AG04450 (cell line): ENCODE measurements at regions of chr17 and their contacts with region 1.

Region 1: DNA sequence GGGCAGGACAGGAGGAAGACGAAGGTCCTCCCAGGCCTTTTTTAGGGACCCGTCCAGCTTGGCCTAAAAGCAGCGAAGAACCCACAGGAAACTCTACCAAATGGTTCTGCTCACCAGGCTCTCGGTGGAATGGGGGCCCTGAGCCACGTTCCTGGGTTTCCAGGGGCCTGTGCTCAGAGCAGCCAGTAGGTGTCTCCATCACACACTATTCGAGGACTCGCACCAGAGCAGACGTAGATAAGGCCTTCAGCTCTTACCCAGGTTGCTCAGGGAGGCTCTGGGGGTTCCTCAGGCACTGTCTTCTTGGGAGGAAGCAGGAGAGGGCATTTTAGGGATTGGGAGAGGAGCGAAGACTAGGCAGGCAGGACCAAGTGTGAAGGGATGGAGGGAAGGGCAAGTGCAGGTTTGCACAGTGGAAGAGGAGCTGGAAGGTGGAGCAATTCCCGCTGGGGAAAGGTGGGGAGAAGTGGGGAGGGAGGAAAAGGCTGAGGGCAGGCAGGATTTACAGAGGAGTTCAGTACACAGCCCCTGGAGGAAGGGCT is 157.1 kb downstream of the RGS9 start:
- DNase-seq: peak; percentile 46
- H3K4me3 ChIP-seq: no peak overlapping the region
- H3K27ac ChIP-seq: no peak overlapping the region
- H3K27me3 ChIP-seq: peaks cover 8% of the 10 kb centered on the region
- CTCF ChIP-seq: peak; percentile 91

Region 2: DNA sequence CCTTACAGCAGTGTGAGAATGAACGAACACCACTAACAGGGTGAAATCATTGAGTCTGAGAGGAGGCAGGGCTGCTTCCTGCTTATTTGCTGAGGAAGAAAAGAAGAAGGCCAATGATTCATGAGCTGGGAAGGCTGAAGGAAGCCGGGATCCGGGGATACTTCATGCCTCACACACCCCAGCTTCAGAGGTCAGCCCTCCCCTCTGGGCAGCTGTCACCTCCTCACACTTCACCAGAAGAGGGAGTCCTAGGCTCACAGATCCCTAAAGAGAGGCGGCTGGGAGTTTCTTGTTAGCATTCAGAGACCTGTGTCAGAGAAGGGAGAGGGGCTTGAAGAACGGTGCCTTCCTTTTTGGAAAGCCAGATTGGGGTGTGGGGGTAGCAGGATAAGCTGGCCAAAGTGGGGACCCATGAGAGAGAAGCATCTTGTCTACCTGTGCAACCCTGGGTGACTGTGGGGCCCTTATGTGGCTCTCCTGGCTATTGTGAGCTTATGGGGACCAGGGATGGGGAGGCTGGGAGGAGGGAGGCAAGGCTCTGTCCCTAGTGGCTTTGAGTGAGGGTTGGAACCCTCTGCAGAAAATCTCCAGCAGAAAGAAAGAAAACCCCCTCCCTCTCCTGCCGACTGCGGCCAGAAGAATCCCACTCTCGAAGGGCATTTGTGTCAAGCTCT is 62.5 kb before region 1 on chr17:
- CTCF ChIA-PET with region 1: interaction called, 17 read pairs
- POLR2A ChIA-PET with region 1: no interaction called
- DNase-seq: peak; percentile 63
- H3K4me3 ChIP-seq: no peak overlapping the region
- H3K27ac ChIP-seq: no peak overlapping the region
- H3K27me3 ChIP-seq: peaks cover 14% of the 10 kb centered on the region
- CTCF ChIP-seq: peak; percentile 80

Region 3: GRCh38 chr17:65485376-65486299 is 191.4 kb after region 1 on chr17:
- CTCF ChIA-PET with region 1: no interaction called
- POLR2A ChIA-PET with region 1: no interaction called
- DNase-seq: no peak
- H3K4me3 ChIP-seq: no peak overlapping the region
- H3K27ac ChIP-seq: no peak overlapping the region
- H3K27me3 ChIP-seq: peaks cover 17% of the 10 kb centered on the region
- CTCF ChIP-seq: no peak

Region 4: GRCh38 chr17:65556014-65556909 is 262.0 kb after region 1 on chr17:
- CTCF ChIA-PET with region 1: interaction called, 24 read pairs
- POLR2A ChIA-PET with region 1: no interaction called
- DNase-seq: no peak
- H3K4me3 ChIP-seq: no peak overlapping the region
- H3K27ac ChIP-seq: peak overlapping the region; percentile 21
- H3K27me3 ChIP-seq: peaks cover 11% of the 10 kb centered on the region
- CTCF ChIP-seq: peak; percentile 76

Region 5: GRCh38 chr17:65561394-65562205 is 267.4 kb after region 1 on chr17 and contains the start of gene AXIN2:
- CTCF ChIA-PET with region 1: interaction called, 24 read pairs
- POLR2A ChIA-PET with region 1: no interaction called
- DNase-seq: peak; percentile 53
- H3K4me3 ChIP-seq: peak within 1 kb of the TSS; percentile 67
- H3K27ac ChIP-seq: peak within 1 kb of the TSS; percentile 96
- H3K27me3 ChIP-seq: peaks cover 11% of the 10 kb centered on the region
- CTCF ChIP-seq: 0 out of 2 replicates have a peak, but pooled peaks have one; percentile 22
- polyA plus RNA-seq, gene AXIN2: 2.4 and 2.8 TPM in 2 replicates

Region 6: DNA sequence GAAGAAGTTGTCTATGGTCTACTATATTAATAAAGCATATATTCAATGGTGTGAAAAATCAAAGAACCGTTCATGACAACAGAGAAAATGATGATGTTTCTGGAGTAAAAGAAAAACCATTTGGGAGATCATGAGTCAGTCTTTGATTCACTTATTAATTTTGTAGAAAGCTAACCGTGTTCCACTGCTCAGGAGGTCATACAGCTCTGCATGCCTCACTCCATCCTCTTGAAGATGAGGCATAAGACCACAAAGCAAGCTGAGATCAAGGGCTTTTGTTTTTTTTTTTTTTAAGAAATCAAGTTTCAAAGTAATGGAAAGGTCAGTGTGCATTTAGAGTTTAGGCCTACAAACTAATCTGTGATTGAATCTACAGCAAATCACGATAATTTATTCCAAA is 691.3 kb after region 1 on chr17:
- CTCF ChIA-PET with region 1: interaction called, 20 read pairs
- POLR2A ChIA-PET with region 1: no interaction called
- DNase-seq: no peak
- H3K4me3 ChIP-seq: no peak overlapping the region
- H3K27ac ChIP-seq: no peak overlapping the region
- H3K27me3 ChIP-seq: no peaks in the 10 kb centered on the region
- CTCF ChIP-seq: no peak

Region 7: DNA sequence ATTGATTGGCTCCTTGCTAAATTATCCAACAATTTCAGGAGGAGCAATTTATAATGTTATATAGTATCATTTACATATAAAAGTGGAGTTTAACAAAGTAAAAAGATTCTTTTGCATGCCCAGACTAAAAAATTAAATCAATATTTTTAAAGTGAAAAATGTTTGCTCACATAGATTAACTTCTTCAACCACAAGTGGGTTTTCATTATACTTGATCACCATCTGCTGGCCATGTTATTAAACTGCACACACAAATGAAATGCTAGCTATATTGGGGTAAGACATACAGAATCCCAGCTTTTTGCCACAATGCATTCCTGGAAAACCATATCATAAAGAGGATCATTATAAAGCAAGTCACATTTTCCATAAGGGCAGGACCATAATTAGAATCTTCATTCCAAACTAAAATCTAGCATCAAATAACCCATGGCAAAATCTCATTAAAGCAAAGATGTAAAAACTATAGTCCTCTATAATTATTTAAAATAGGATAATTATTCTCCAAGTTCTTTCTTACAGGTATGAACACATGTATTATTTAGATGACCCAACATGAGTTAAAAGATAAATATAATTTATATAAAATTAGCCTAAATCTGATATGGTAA is 871.4 kb after region 1 on chr17:
- CTCF ChIA-PET with region 1: interaction called, 79 read pairs
- POLR2A ChIA-PET with region 1: no interaction called
- DNase-seq: peak; percentile 32
- H3K4me3 ChIP-seq: no peak overlapping the region
- H3K27ac ChIP-seq: no peak overlapping the region
- H3K27me3 ChIP-seq: no peaks in the 10 kb centered on the region
- CTCF ChIP-seq: peak; percentile 68